Activated CD4-positive, alpha-beta memory T cell treated with anti-CD3 and anti-CD28 coated beads, Interleukin-2, amount 10 ng/mL, durations not matched to agents 7 days and 5 days (primary cell): ENCODE measurements at regions of chr17 and their contacts with region 1.

Region 1: GRCh38 chr17:77444984-77445759 is 304.4 kb downstream of the SEC14L1 start:
- DNase-seq: peak; percentile 90
- H3K4me3 Mint-ChIP-seq: peak overlapping the region; percentile 78
- H3K27ac Mint-ChIP-seq: peak overlapping the region; percentile 96
- H3K4me1 Mint-ChIP-seq: peaks cover 97% of the 10 kb centered on the region
- H3K27me3 Mint-ChIP-seq: no peaks in the 10 kb centered on the region

Region 2: DNA sequence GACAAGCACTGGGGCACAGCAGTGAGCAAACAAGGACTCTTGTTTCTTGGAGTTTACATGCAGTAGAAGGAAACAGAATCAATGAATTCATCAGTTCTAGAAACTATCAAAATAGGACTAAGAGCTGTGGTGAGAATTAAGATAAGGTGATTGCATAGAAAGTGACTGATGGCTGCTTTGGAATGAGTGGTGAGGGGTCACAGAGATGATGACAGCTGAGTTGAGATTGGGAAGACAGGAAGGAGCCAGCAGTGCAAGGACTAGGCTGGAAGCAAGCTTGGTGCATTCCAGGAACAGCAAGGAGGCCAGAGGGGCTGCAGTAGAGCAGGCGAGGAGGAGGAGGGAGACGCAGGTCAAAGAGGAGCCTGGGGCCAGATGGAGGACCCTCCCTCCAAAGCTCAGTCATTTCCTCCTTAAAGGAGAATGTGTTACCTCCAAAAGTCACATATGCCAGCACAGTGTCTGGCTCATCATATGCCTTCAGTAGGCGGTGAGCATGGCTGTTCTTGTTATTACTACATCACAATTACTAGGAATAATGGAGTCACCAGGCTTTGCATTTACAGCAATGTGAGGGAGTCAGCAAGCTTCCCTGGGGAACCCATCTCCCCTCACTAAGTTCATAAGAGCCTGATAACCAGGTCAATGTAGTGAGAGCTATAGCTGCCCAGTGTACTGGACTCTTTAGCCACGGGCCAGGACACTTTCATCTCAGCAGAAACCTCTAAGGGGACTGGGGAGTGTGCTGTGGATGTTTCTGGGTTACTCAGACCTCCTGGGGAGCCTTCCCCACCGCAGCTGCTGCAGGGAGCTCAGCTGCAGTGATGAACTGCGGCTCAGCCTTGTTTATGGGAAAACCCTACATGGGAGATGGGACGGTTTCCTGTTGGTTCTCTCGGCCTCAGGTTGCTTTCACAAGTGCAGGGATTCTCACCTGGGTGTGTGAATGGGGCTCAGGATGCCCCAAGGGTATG is 147.2 kb before region 1 on chr17:
- CTCF ChIA-PET with region 1: no interaction called
- POLR2A ChIA-PET with region 1: no interaction called
- DNase-seq: no peak
- H3K4me3 Mint-ChIP-seq: no peak overlapping the region
- H3K27ac Mint-ChIP-seq: no peak overlapping the region
- H3K4me1 Mint-ChIP-seq: no peaks in the 10 kb centered on the region
- H3K27me3 Mint-ChIP-seq: no peaks in the 10 kb centered on the region

Region 3: DNA sequence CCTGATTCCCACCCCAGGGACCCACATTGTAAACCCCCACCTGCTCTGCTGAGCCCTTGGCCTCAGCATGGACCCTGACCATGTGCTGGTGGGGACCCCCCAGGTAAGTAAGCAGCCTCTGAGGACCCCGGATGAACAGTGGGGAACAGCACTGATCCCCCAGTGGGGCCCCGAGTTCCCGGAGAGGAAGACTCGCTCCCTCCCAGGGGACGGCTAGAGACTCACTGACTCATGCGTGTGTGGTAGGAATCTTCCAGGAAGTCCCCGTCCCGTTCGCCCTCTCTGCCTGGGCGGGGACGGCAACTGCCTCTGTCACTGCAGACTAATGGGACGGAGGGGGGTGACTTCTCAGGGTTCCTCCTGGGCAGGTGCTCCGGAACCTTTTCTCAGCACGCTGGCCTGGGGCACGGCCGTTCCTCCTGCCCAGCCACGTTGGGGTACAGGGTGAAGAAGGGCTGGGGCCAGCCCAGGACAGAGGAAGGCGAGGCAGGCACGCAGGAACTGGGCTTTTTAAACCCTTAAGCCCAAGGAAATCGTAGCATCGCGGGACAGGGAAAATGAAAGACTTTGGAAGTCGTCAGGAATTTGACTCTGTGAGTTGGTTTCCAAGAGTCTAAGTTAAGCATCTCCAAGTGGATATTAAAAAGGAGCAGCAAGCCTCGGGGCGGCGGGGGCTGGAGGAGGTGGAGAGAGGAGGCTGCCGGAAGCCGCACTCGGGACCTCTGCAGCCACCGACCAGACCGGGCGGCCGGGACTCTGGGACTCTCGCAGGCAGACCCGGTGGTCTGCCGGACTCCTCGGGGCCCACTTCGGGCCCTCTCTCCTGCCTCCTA is 125.7 kb before region 1 on chr17:
- CTCF ChIA-PET with region 1: no interaction called
- POLR2A ChIA-PET with region 1: no interaction called
- DNase-seq: peak; percentile 65
- H3K4me3 Mint-ChIP-seq: peak overlapping the region; percentile 78
- H3K27ac Mint-ChIP-seq: peak overlapping the region; percentile 58
- H3K4me1 Mint-ChIP-seq: peaks cover 36% of the 10 kb centered on the region
- H3K27me3 Mint-ChIP-seq: no peaks in the 10 kb centered on the region

Region 4: GRCh38 chr17:77331301-77331864 is 113.8 kb before region 1 on chr17:
- CTCF ChIA-PET with region 1: interaction called, 13 read pairs
- POLR2A ChIA-PET with region 1: interaction called, 15 read pairs
- DNase-seq: peak; percentile 97
- H3K4me3 Mint-ChIP-seq: peak overlapping the region; percentile 73
- H3K27ac Mint-ChIP-seq: peak overlapping the region; percentile 90
- H3K4me1 Mint-ChIP-seq: peaks cover 46% of the 10 kb centered on the region
- H3K27me3 Mint-ChIP-seq: no peaks in the 10 kb centered on the region

Region 5: GRCh38 chr17:77391668-77392375 is 53.4 kb before region 1 on chr17:
- CTCF ChIA-PET with region 1: interaction called, 7 read pairs
- POLR2A ChIA-PET with region 1: interaction called, 17 read pairs
- DNase-seq: peak; percentile 83
- H3K4me3 Mint-ChIP-seq: peak overlapping the region; percentile 66
- H3K27ac Mint-ChIP-seq: peak overlapping the region; percentile 85
- H3K4me1 Mint-ChIP-seq: peaks cover 83% of the 10 kb centered on the region
- H3K27me3 Mint-ChIP-seq: no peaks in the 10 kb centered on the region

Region 6: GRCh38 chr17:77429919-77430752 is 15.0 kb before region 1 on chr17:
- CTCF ChIA-PET with region 1: interaction called, 35 read pairs
- POLR2A ChIA-PET with region 1: interaction called, 12 read pairs
- DNase-seq: peak; percentile 83
- H3K4me3 Mint-ChIP-seq: no peak overlapping the region
- H3K27ac Mint-ChIP-seq: peak overlapping the region; percentile 38
- H3K4me1 Mint-ChIP-seq: peaks cover 83% of the 10 kb centered on the region
- H3K27me3 Mint-ChIP-seq: no peaks in the 10 kb centered on the region

Region 7: DNA sequence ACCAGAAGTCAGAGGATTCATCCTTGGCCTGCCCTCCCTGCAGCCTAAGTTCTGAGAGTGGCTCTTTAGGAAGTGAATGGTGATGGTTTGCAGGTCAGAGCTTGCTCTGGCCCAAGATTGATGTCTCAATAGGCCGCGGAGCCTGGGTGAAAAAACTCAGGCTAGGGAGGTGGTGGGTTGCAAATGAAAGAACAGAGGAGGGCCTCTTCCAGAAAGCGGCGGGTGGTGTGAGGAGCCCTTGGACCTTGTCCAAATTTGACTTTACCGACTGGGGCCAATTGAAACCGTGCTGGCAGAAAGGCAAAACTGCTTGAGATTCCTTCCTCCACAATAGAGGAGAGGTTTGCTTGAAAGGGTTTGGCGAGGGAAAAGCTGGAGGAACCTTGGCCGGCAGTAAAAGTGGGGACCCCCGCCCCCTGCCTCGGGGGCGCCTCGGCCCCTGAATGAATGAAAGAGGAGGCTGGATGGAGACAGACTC is 26.9 kb after region 1 on chr17:
- CTCF ChIA-PET with region 1: interaction called, 11 read pairs
- POLR2A ChIA-PET with region 1: interaction called, 118 read pairs
- DNase-seq: no peak
- H3K4me3 Mint-ChIP-seq: peak overlapping the region; percentile 12
- H3K27ac Mint-ChIP-seq: peak overlapping the region; percentile 84
- H3K4me1 Mint-ChIP-seq: peaks cover 92% of the 10 kb centered on the region
- H3K27me3 Mint-ChIP-seq: no peaks in the 10 kb centered on the region